ENCODE measurements at regions of chr9 and their contacts with region 1.

Region 1: GRCh38 chr9:107489687-107490605 is at the start of gene KLF4:
- DNase-seq: peak; percentile 78 to 92
- H3K4me3 ChIP-seq: peak within 1 kb of the TSS; percentile 100
- H3K27ac ChIP-seq: peak within 1 kb of the TSS; percentile 85
- H3K4me1 ChIP-seq: peaks cover 29% of the 10 kb centered on the region
- H3K27me3 ChIP-seq: no peaks in the 10 kb centered on the region
- CTCF ChIP-seq: no peak
- total RNA-seq, gene KLF4: 48.5 and 49.0 TPM in 2 replicates

Region 2: DNA sequence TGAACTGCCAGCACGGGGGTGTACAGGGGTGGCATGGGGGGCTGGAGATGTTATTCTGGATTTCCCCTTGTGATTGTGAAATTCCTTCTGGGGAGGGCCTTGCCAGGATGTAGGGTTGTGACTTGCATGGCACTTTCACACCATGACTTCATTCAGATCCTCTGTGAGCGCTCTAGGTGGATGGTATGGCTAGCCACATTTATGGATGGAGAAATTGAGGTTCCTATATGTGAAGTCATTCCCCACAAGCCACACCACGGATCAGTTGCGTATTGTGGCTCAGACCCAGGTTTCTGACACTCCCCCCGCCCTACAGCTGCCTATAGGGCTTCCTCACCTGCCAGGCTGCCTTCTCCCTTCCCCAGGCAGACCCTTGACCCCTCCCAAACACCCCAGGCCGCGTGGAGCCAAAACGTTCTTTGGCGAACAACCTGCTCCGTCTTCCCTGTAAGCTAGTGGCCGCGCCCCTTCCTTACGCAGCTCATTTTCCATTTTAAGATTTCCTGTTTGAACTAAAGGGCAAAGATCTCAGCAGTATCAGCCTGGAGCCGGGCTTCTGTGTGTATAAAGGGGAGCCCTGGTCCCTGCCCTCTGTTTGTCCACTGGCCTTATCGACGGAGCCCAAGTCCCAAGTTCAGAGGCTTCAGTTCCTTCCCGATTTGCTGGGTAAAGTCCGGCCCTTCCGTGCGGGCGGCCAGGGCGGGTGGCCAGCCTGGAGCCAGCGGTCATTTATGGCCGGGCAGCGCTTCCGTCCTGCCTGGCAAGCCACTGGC is 97.4 kb after region 1 on chr9:
- CTCF ChIA-PET with region 1: no interaction called
- POLR2A ChIA-PET with region 1: interaction called, 22 read pairs
- intact Hi-C with region 1: loop called (anchors 5 kb)
- DNase-seq: peak; percentile 39 to 50
- H3K4me3 ChIP-seq: peak overlapping the region; percentile 56; the same call in 1 of the 2 replicates
- H3K27ac ChIP-seq: peak overlapping the region; percentile 68
- H3K4me1 ChIP-seq: peaks cover 25% of the 10 kb centered on the region
- H3K27me3 ChIP-seq: no peaks in the 10 kb centered on the region
- CTCF ChIP-seq: no peak

Region 3: GRCh38 chr9:107749787-107750444 is 260.0 kb after region 1 on chr9:
- CTCF ChIA-PET with region 1: no interaction called
- POLR2A ChIA-PET with region 1: interaction called, 8 read pairs
- intact Hi-C with region 1: loop called (anchors 1 kb)
- DNase-seq: peak; percentile 86 to 87
- H3K4me3 ChIP-seq: peak overlapping the region; percentile 25; the same call in 1 of the 2 replicates
- H3K27ac ChIP-seq: peak overlapping the region; percentile 99
- H3K4me1 ChIP-seq: peaks cover 62% of the 10 kb centered on the region
- H3K27me3 ChIP-seq: no peaks in the 10 kb centered on the region
- CTCF ChIP-seq: no peak

Region 4: DNA sequence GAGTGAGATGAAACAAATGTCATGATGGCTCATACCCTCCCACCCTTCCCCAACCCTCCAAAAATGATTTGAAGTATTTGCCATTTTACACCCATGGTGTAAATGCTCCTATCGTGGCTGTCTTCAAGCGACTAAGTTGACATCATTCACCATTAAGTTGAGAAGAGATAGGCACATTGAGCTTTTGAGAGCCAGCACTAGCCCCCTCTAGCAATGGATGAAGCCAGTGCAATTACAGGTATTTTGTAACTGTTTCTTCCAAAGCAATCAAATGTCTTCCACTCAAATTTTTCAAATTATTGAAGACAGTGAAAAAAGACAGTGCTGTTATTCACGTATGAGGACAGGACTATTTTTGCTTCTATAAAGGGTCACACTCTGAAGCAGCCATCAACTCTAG is 371.1 kb after region 1 on chr9:
- CTCF ChIA-PET with region 1: no interaction called
- POLR2A ChIA-PET with region 1: interaction called, 15 read pairs
- intact Hi-C with region 1: no loop called
- DNase-seq: no peak
- H3K4me3 ChIP-seq: no peak overlapping the region
- H3K27ac ChIP-seq: no peak overlapping the region
- H3K4me1 ChIP-seq: no peaks in the 10 kb centered on the region
- H3K27me3 ChIP-seq: no peaks in the 10 kb centered on the region
- CTCF ChIP-seq: no peak

Region 5: DNA sequence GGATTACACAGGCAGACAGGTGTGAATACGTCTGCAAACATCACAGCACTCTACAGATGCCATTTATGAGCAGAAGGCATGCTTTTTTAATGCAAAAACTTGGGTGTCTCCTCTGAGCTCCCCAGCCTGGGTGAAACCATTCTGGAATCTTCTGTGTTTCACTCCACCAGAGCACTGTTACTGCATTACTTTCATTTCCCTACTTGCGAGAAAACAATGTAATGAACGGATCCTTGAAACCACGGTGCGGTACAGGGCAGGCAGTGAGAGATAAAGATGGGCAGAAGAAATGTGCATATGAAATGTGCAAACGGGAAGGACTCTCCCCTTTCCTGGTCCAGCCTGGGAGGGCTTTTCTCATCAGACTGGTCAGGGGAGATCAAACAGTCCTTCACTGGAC is 583.9 kb after region 1 on chr9:
- CTCF ChIA-PET with region 1: no interaction called
- POLR2A ChIA-PET with region 1: interaction called, 10 read pairs
- intact Hi-C with region 1: no loop called
- DNase-seq: no peak
- H3K4me3 ChIP-seq: no peak overlapping the region
- H3K27ac ChIP-seq: no peak overlapping the region
- H3K4me1 ChIP-seq: no peaks in the 10 kb centered on the region
- H3K27me3 ChIP-seq: no peaks in the 10 kb centered on the region
- CTCF ChIP-seq: no peak

Region 6: GRCh38 chr9:108444400-108445358 is 954.7 kb after region 1 on chr9:
- CTCF ChIA-PET with region 1: no interaction called
- POLR2A ChIA-PET with region 1: no interaction called
- intact Hi-C with region 1: loop called (anchors 1 kb)
- DNase-seq: peak; percentile 71 to 95
- H3K4me3 ChIP-seq: peak overlapping the region; percentile 34; the same call in 1 of the 2 replicates
- H3K27ac ChIP-seq: peak overlapping the region; percentile 80
- H3K4me1 ChIP-seq: peaks cover 45% of the 10 kb centered on the region
- H3K27me3 ChIP-seq: no peaks in the 10 kb centered on the region
- CTCF ChIP-seq: no peak

Measured in PC-9 (cell line).